Right cardiac atrium (tissue), 5 donors: ENCODE measurements at regions of chr2 and their contacts with region 1.

Region 1: DNA sequence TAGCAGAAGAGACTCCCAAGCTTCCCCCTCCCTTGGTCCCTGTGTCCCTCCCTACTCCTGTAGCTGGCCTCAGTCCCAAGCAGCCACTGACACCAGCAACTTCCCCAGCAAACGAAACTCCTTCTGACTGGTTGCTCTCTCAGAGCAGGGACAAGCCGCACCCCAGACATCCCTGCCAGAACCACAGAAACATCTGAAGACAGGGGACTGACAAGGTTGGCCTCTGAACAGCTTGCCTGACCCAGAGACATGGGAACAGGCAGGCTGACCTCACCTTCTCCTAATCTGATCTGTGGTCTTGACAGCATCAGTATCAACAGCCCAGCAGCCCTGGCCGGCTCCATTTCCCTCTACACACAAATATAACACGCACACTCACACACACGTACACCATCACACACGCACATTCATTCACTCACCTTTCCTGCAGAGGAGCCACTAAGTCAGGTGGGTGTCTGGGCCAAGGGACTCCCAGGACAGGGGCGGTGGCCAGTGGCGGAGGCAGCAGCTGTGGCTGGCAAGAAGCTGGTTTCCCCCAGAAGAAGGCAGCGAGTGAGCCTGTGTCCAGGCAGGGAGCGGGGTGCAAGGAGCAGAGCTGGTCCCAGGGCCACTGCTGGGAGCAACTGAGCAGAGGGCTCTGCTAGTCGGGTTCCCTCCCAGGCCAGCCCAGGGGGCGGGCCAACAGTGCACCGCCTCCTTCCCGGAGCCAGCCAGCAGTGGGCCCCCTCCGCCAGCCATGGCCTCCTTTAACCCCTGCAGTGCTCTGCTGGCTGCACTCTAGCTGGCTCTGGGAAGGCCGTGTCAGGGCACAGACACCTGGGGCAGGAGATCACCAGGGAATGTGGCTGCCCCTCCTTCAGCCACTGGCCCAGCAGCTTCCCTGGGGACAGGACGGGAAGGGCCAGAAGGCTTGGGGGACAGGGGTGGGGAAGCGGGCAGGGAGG is 59.1 kb downstream of the TNS1 start:
- DNase-seq: peak; percentile 87 to 95 (median 94)
- ATAC-seq: peak; percentile 91 to 92
- H3K4me3 ChIP-seq: peak overlapping the region; percentile 79
- H3K27ac ChIP-seq: peak overlapping the region; percentile 90
- H3K4me1 ChIP-seq: peaks cover 25% of the 10 kb centered on the region
- H3K27me3 ChIP-seq: no peaks in the 10 kb centered on the region

Region 2: GRCh38 chr2:217415316-217415715 is 528.4 kb before region 1 on chr2:
- intact Hi-C with region 1: no loop called
- DNase-seq: no peak
- ATAC-seq: no peak
- H3K4me3 ChIP-seq: no peak overlapping the region
- H3K27ac ChIP-seq: no peak overlapping the region
- H3K4me1 ChIP-seq: peaks cover 8% of the 10 kb centered on the region
- H3K27me3 ChIP-seq: no peaks in the 10 kb centered on the region

Region 3: DNA sequence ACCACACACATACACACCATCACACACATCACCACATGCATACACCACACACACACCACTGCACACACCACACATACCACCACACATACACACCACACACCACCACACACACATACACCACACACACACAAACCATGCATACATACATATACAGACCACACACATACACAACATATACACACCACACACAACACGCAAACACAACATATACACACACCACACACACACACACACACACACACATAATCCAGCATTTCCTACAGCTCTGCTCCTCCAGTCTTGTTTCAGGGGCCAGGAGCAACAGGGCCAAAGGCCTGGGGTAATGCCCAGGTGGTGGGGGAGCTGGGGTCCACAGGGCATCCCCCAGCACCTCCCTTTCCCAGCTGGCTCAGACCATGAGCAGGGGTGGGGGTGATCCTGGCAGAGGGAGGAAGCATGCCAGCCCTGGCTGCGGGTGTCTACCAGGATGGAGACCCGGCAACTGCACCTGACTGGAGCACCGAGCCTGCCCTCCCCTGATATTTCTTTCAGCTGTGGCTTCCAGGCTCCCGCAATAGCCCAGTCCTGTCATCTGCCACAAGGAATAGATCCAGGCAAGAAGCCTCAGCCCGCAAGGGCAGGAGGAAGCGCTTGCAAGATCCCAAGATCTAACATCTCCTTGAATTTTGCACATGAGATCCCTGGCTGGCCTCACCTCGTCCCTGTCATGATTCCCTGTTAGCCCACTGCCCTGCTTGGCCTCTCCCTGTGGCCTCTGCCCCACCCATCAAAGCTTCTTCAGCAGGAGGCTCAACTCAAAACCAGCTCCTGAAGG is 137.8 kb before region 1 on chr2:
- intact Hi-C with region 1: no loop called
- DNase-seq: peak in 2 of 3 donors; percentile 51 to 57
- ATAC-seq: peak in 1 of 2 donors; percentile 3
- H3K4me3 ChIP-seq: no peak overlapping the region
- H3K27ac ChIP-seq: peak overlapping the region; percentile 13
- H3K4me1 ChIP-seq: peaks cover 20% of the 10 kb centered on the region
- H3K27me3 ChIP-seq: no peaks in the 10 kb centered on the region

Region 4: DNA sequence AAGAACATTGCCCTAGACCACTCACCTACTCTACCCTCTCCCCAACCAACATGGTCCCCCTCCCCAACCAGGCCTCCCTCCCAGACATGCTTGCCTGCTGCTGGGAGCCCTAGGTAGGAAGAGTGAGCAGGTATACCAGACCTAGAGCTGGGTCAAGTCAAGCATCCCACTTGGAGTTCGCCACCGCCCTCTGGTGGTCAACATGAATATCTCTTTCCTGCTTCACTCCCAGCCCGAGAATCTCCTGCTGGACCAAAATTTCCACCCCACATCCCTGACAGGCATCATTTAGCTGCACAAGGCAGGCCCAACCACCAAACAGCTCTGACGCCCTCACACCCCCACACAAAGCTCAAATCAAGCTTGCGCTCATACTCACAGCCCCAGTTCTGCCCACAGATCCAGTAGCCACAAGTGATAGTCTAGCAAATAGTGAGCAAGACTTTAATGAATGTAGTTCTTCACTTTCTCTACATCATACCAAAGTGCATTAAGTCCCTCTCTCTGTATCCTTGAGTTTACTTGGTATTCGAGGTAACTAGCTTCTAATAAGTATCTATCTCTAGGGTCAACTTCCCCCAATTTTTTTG is 56.9 kb before region 1 on chr2:
- intact Hi-C with region 1: loop called in 2 of 4 experiments (anchors 5 to 10 kb)
- DNase-seq: peak; percentile 79 to 85 (median 80)
- ATAC-seq: peak; percentile 26 to 28
- H3K4me3 ChIP-seq: no peak overlapping the region
- H3K27ac ChIP-seq: peak overlapping the region; percentile 42
- H3K4me1 ChIP-seq: peaks cover 31% of the 10 kb centered on the region
- H3K27me3 ChIP-seq: no peaks in the 10 kb centered on the region

Region 5: GRCh38 chr2:217899231-217900009 is 44.3 kb before region 1 on chr2:
- intact Hi-C with region 1: loop called in 3 of 4 experiments (anchors 5 kb)
- DNase-seq: peak; percentile 80 to 86 (median 84)
- ATAC-seq: peak; percentile 12 to 28
- H3K4me3 ChIP-seq: no peak overlapping the region
- H3K27ac ChIP-seq: peak overlapping the region; percentile 88
- H3K4me1 ChIP-seq: peaks cover 63% of the 10 kb centered on the region
- H3K27me3 ChIP-seq: no peaks in the 10 kb centered on the region

Region 6: DNA sequence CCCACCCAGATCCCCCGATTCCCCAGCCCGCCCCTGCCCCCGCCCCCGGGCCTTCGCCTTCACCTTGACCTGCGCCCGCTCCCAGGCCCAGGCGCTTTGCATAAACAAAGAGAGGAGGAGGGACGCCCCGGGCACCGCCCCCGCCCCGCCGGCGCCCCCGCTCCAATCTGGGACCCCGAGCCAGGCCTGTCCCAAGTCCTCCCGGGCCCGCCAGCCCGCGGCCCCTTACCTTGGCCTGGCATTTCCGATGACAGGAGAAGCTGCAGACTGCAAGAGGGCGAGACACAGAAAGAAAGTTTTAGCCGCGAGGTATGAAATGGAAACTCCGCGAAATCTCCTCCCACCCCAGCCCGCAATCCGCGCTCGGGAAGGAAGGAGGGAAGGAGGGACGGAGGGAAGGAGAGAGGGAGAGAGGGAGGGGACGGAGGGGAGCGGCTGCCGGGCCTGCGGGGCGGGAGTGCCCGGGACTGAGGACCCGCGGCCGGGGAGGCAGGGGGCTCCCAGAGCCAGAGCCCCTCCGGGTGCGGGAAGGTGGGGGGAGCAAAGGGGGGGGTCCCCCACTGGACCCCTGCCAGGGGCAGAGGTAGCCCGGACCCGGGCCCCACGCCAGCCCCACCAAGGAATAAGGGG is 34.9 kb after region 1 on chr2:
- intact Hi-C with region 1: loop called (anchors 5 kb)
- DNase-seq: peak in 2 of 3 donors; percentile 72 to 76
- ATAC-seq: peak; percentile 33 to 58
- H3K4me3 ChIP-seq: peak overlapping the region; percentile 83
- H3K27ac ChIP-seq: peak overlapping the region; percentile 39
- H3K4me1 ChIP-seq: peaks cover 31% of the 10 kb centered on the region
- H3K27me3 ChIP-seq: no peaks in the 10 kb centered on the region

Region 7: GRCh38 chr2:217993817-217994463 is 50.2 kb after region 1 on chr2:
- intact Hi-C with region 1: no loop called
- DNase-seq: peak; percentile 75 to 89 (median 89)
- ATAC-seq: peak; percentile 40 to 58
- H3K4me3 ChIP-seq: no peak overlapping the region
- H3K27ac ChIP-seq: no peak overlapping the region
- H3K4me1 ChIP-seq: no peaks in the 10 kb centered on the region
- H3K27me3 ChIP-seq: no peaks in the 10 kb centered on the region

Region 8: DNA sequence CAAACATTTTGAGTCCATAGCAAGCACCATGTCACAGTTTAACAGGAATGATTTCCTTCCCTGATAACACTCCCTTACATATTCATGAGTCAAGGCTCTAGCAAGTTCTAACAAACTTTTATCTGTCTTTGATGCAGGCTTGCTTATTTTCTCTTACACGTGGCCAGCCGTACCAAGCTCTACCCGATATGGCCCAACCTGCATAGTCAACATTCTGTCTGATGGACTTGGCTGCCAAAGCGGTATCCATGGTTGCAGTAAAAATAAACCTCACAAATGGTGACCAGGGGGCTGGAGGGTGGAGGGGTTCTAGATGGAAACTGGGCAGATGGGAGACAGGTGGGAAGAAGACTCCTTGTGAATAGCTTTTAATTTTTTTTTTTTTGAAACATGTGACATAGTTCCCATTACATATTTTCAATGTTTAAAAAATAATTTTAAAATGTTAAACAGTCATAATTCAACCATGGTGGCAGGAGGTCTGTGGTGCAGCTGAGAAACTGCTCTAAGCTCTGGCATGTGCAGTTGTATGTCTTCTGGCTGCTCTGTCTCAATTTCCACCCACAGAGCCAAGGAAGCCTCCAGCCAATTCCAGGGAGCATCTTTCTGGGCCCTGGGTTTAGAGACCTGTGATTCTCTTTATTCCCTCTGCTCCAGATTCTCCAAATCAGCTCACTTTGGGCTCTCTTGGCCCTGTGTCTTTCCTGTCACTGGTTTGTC is 243.7 kb after region 1 on chr2:
- intact Hi-C with region 1: no loop called
- DNase-seq: no peak
- ATAC-seq: peak in 1 of 2 donors; percentile 34
- H3K4me3 ChIP-seq: no peak overlapping the region
- H3K27ac ChIP-seq: no peak overlapping the region
- H3K4me1 ChIP-seq: no peaks in the 10 kb centered on the region
- H3K27me3 ChIP-seq: no peaks in the 10 kb centered on the region